Activated B cell treated with CpG ODN at 0.5 μM for 24 hours (primary cell): ENCODE measurements at regions of chr2 and their contacts with region 1.

Region 1: DNA sequence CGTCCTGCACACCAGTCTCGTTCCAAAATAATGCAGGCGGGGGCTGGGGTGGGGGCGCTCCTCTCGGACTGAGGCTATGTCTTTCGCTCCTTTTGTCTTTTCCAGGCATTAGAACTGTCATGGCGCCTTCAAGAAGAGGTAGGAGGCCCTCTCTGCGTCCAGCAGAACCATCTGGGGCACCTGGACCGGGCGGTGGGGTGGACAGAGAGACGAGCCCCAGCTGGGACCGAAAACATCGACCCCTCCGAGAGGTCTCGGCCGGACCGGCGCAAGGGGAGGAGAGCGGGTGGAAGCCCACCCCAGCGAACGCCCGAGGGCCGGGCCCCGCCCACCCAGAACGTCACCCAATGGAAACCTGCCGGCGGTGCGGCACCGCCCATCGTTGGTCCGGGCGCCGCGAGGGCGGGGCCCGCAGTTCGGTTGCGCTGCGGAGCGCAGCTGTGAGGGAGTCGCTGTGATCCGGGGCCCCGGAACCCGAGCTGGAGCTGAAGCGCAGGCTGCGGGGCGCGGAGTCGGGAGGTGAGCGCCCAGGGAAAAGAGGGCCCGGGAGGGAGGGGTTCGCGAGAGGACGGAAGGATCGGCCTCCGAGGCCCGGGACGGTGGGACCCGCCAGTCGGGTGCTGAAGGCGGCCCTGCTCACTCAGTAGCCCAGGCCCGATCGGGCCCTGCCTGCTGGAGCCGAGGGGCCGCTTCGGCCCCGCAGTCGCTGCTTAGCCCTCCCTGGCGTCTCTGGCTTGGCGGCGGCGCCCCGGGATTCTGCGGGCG is at the start of gene NRBP1:
- DNase-seq: peak; percentile 95
- ATAC-seq: peak; percentile 90
- H3K4me3 Mint-ChIP-seq: peak within 1 kb of the TSS; percentile 98
- H3K27ac Mint-ChIP-seq: peak within 1 kb of the TSS; percentile 98
- H3K4me1 Mint-ChIP-seq: peaks cover 50% of the 10 kb centered on the region
- H3K27me3 Mint-ChIP-seq: no peaks in the 10 kb centered on the region
- CTCF ChIP-seq: no peak
- total RNA-seq, gene NRBP1: 78.9 and 82.3 TPM in 2 replicates

Region 2: DNA sequence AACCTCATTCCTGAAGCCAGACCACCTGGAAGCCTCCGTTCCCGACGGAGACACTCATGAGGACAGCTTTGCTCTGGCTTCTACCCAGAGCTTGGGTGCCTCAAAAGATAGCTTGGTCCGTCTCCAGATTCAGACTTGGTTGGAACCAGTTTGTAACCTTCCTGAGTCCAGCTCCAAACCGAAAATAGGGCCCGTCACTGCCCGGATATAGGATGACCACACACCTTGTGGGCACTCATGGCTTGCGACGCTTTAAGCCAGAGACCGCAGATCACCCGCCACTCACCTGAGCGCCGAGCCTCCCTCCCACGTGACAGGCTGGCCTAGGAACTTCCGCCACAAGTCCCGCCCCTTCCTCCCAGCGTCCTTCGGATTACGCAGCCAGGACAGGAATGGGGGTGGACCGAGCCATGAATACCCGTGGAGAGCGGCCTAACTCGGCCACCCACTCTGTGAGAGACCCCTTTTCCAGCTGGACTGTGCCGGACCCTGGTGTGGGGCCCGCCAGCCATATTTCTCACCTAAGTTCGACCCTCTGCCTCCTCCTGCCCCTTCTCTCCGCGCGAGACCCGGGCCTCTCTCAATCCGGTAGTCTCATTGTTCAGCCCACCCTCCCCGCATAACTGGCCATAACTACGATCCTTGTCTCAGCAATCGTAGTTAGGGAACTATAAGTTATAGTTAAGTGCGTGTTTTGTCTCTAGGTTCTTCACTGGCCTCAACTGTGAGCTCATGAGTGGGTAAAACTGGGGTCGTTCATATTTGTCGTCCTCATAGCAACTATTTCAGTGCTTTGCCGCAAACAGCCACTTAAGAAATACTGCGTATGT is 105.4 kb before region 1 on chr2 and contains the start of gene MPV17:
- CTCF ChIA-PET with region 1: no interaction called
- POLR2A ChIA-PET with region 1: interaction called, 13 read pairs
- intact Hi-C with region 1: loop called (anchors 2 kb)
- DNase-seq: peak; percentile 79
- ATAC-seq: peak; percentile 95
- H3K4me3 Mint-ChIP-seq: peak within 1 kb of the TSS; percentile 99
- H3K27ac Mint-ChIP-seq: peak within 1 kb of the TSS; percentile 96
- H3K4me1 Mint-ChIP-seq: peaks cover 25% of the 10 kb centered on the region
- H3K27me3 Mint-ChIP-seq: no peaks in the 10 kb centered on the region
- CTCF ChIP-seq: no peak
- total RNA-seq, gene MPV17: 78.1 and 98.3 TPM in 2 replicates

Region 3: GRCh38 chr2:27380626-27381545 is 47.5 kb before region 1 on chr2 and contains the start of gene ZNF513:
- CTCF ChIA-PET with region 1: no interaction called
- POLR2A ChIA-PET with region 1: interaction called, 25 read pairs
- intact Hi-C with region 1: loop called (anchors 2 kb)
- DNase-seq: peak; percentile 85
- ATAC-seq: peak; percentile 91
- H3K4me3 Mint-ChIP-seq: peak within 1 kb of the TSS; percentile 87
- H3K27ac Mint-ChIP-seq: peak within 1 kb of the TSS; percentile 89
- H3K4me1 Mint-ChIP-seq: peaks cover 29% of the 10 kb centered on the region
- H3K27me3 Mint-ChIP-seq: no peaks in the 10 kb centered on the region
- CTCF ChIP-seq: no peak
- total RNA-seq, gene ZNF513: 30.1 and 32.8 TPM in 2 replicates

Region 4: GRCh38 chr2:27441958-27442919 is 13.8 kb after region 1 on chr2 and contains the start of gene KRTCAP3:
- CTCF ChIA-PET with region 1: no interaction called
- POLR2A ChIA-PET with region 1: interaction called, 3 read pairs
- intact Hi-C with region 1: loop called (anchors 1 kb)
- DNase-seq: peak; percentile 68
- ATAC-seq: peak; percentile 98
- H3K4me3 Mint-ChIP-seq: peak within 1 kb of the TSS; percentile 52
- H3K27ac Mint-ChIP-seq: peak within 1 kb of the TSS; percentile 30
- H3K4me1 Mint-ChIP-seq: peaks cover 13% of the 10 kb centered on the region
- H3K27me3 Mint-ChIP-seq: no peaks in the 10 kb centered on the region
- CTCF ChIP-seq: no peak
- total RNA-seq, gene KRTCAP3: 6.3 and 10.0 TPM in 2 replicates

Region 5: DNA sequence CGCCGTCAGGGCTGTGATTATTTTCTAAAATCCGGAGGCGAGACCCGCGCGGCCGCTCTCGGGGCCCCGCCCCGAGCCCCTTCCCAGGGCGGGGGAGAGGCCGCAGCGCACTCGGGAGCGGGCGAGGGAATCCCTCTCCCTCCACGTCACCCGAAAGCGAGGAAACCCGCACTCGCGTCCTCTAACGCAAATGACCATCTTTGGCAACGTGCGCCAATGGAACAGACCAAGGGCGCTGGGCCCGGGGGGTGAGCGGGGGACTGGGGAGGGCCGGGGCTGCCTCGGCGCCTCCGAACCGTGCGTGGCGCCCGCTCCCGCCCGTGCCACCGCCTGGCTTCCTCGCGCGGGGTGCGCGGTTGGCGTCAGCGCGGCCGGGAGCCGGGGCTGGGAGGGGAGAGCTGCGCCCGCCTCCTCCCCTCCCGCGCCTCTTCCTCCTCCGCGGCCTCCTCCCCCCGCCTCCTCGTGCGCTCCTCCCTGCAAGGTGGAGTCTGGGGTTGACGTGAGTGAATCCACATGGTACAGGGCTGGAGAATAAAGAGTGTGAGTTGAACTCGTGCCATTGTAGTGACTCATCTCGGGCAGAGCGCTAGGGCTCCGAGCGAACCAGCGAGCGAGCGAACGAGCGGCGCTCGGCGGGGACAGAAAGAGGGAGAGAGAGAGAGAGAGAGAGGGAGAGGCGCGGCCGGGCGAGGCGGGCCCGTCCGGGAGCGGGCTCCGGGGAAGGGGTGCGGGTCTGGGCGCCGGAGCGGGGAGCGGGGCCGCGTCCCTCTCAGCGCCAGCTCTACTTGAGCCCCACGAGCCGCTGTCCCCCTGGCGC is 964.1 kb after region 1 on chr2 and contains the start of gene FOSL2:
- CTCF ChIA-PET with region 1: no interaction called
- POLR2A ChIA-PET with region 1: no interaction called
- intact Hi-C with region 1: loop called (anchors 5 kb)
- DNase-seq: peak; percentile 78
- ATAC-seq: peak; percentile 84
- H3K4me3 Mint-ChIP-seq: peak within 1 kb of the TSS; percentile 86
- H3K27ac Mint-ChIP-seq: peak within 1 kb of the TSS; percentile 89
- H3K4me1 Mint-ChIP-seq: peaks cover 17% of the 10 kb centered on the region
- H3K27me3 Mint-ChIP-seq: peaks cover 10% of the 10 kb centered on the region
- CTCF ChIP-seq: no peak
- total RNA-seq, gene FOSL2: 2.7 and 3.8 TPM in 2 replicates